Heart left ventricle (tissue), 16 donors: ENCODE measurements at regions of chr15 and their contacts with region 1.

Region 1: DNA sequence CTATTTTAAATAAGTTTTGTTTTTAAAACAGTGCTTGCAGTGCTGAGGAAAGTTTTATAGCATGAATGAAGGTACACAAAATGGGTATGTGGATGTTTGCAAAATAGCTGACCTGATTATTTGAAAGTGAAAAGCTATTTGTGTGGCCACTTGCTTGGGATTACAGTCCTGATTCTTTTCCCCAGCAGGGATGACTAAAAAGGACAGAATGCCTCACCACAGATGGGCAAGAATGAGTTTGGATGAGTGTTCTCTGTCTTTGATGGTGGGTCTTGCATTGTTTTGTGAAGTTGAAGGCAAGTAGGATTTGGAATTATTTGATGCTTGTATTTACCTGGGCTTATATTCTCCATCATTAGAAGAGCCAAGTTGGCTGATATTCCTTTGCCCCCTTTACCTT is 48.8 kb upstream of the MEIS2 start:
- DNase-seq: no peak
- ATAC-seq: no peak
- H3K4me3 ChIP-seq: no peak overlapping the region
- H3K27ac ChIP-seq: no peak overlapping the region
- H3K4me1 ChIP-seq: peaks cover 0 to 3% (median 0%) of the 10 kb centered on the region in 12 donors
- H3K27me3 ChIP-seq: no peaks in the 10 kb centered on the region
- CTCF ChIP-seq: no peak
- POLR2A ChIP-seq: no peak

Region 2: DNA sequence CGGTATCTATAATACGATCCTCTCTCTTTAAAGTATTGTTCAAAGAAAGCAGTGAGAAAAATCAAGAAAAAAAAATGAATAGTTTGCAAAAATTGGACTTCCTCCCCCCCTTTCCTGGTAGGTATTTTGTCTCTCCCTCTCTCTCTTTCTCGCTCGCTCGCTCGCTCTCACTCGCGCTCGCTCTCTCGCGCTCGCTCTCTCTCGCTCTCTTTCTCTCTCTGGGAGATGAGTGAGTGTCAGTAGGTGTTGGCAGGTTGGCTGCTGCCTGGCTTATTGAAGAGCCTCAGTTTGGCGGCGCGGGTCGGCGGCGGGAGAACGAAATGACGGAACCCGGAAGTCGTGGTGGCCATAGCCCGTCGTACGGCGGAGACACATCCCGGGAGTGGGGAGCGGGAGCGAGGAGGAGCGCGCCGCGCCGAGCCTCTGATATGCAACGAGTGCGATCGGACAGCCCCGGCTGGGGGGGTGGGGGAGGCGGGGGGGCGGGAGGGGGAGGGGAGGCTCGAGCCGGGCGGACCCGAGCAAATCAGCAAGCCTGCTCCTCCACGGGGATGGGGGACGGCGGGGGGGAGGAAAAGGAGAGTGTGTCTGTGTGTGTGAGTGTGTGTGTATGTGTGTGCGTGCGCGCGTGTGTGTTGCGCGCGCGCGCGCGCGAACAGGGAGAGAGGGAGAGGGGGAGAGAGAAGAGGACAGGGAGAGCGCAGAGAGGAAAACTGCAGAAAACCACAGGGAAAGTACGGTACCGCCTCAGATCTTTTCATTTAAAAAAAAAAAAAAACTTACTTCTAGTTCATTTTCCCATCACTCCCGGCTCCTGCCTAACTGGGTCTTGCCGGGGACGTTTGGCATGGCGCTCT is 48.8 kb before region 1 on chr15 and contains the start of gene MEIS2:
- intact Hi-C with region 1: no loop called
- DNase-seq: peak; percentile 90 to 95 (median 95)
- ATAC-seq: peak; percentile 72 to 78 (median 73)
- H3K4me3 ChIP-seq: peak within 1 kb of the TSS; percentile 62 to 82 (median 76)
- H3K27ac ChIP-seq: peak within 1 kb of the TSS; percentile 92 to 98 (median 96)
- H3K4me1 ChIP-seq: peaks cover 0 to 21% (median 3%) of the 10 kb centered on the region in 12 donors
- H3K27me3 ChIP-seq: peaks cover 0 to 71% (median 13%) of the 10 kb centered on the region in 9 donors
- CTCF ChIP-seq: no peak
- POLR2A ChIP-seq: peak in 1 of 2 donors; percentile 52
- total RNA-seq, gene MEIS2: 38.3 to 56.2 (median 49.7) TPM

Region 3: GRCh38 chr15:37125143-37125542 is 24.0 kb before region 1 on chr15:
- intact Hi-C with region 1: loop called in 1 of 10 experiments (anchors 2 kb)
- DNase-seq: no peak
- ATAC-seq: no peak
- H3K4me3 ChIP-seq: no peak overlapping the region
- H3K27ac ChIP-seq: no peak overlapping the region
- H3K4me1 ChIP-seq: peaks cover 0 to 5% (median 0%) of the 10 kb centered on the region in 12 donors
- H3K27me3 ChIP-seq: no peaks in the 10 kb centered on the region
- CTCF ChIP-seq: no peak
- POLR2A ChIP-seq: no peak

Region 4: DNA sequence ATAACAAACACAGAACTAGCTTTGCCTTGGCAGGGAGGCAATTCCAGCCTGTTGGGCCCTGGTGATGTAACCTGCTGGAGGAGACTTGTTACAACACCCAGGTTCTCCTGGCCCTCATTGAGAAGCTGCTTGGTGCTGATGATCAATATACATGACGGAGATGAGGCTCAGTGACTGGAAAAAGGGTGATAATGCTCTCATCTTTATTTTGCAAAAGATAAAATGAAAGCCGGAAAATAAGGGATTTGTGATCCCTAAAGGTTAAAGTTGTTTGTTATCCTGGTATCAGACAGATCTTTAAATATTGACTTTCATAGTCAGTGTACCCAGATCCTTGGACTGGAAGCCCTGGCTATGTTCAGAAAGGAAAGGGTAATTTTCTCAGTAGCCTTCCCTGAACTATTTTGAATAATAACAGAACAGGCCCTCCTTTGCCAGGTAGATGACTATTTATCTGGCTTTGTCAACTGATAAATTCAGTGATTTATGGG is 70.1 kb after region 1 on chr15:
- intact Hi-C with region 1: loop called in 1 of 10 experiments (anchors 10 kb)
- DNase-seq: no peak
- ATAC-seq: no peak
- H3K4me3 ChIP-seq: no peak overlapping the region
- H3K27ac ChIP-seq: no peak overlapping the region
- H3K4me1 ChIP-seq: no peaks in the 10 kb centered on the region
- H3K27me3 ChIP-seq: no peaks in the 10 kb centered on the region
- CTCF ChIP-seq: no peak
- POLR2A ChIP-seq: no peak